GM13977 (cell line): ENCODE measurements at regions of chr1 and their contacts with region 1.

Region 1: GRCh38 chr1:43227143-43227764 is 42.5 kb upstream of the TMEM125 start:
- DNase-seq: peak; percentile 78
- CTCF ChIP-seq: peak; percentile 94

Region 2: DNA sequence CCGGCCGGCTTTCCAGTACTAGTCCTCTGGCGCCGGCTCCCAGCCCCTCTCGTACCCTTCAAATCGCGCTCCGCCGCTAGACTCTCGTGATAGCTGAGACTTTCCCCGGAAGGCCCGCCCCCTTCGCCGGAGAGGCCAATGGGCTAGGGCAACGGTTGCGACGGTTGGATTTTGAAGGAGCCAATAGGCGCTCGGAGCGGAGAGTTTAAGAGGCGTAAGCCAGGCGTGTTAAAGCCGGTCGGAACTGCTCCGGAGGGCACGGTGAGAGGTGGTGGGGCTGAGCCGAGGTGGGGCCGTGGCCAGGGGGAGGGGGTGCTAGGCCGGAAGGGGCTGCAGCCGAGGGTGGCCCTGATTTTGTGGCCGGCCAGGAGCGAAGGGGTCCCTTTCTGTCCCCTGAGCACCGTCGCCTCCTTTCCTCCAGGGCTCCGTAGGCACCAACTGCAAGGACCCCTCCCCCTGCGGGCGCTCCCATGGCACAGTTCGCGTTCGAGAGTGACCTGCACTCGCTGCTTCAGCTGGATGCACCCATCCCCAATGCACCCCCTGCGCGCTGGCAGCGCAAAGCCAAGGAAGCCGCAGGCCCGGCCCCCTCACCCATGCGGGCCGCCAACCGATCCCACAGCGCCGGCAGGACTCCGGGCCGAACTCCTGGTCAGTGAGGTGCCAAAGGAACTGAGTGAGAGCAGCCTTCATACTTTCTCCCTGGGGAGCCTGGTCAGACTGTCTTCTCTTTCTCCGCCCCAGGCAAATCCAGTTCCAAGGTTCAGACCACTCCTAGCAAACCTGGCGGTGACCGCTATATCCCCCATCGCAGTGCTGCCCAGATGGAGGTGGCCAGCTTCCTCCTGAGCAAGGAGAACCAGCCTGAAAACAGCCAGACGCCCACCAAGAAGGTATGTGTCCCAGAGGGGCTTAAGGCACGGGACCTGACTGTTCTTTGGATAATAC is 131.8 kb after region 1 on chr1 and contains the start of gene CDC20:
- in situ Hi-C with region 1: loop called (anchors 25 kb)
- DNase-seq: peak; percentile 98
- CTCF ChIP-seq: no peak

Region 3: GRCh38 chr1:43414634-43415223 is 187.5 kb after region 1 on chr1:
- in situ Hi-C with region 1: no loop called
- DNase-seq: no peak
- CTCF ChIP-seq: peak; percentile 54